HCT116 (cell line): ENCODE measurements at regions of chr10 and their contacts with region 1.

Region 1: DNA sequence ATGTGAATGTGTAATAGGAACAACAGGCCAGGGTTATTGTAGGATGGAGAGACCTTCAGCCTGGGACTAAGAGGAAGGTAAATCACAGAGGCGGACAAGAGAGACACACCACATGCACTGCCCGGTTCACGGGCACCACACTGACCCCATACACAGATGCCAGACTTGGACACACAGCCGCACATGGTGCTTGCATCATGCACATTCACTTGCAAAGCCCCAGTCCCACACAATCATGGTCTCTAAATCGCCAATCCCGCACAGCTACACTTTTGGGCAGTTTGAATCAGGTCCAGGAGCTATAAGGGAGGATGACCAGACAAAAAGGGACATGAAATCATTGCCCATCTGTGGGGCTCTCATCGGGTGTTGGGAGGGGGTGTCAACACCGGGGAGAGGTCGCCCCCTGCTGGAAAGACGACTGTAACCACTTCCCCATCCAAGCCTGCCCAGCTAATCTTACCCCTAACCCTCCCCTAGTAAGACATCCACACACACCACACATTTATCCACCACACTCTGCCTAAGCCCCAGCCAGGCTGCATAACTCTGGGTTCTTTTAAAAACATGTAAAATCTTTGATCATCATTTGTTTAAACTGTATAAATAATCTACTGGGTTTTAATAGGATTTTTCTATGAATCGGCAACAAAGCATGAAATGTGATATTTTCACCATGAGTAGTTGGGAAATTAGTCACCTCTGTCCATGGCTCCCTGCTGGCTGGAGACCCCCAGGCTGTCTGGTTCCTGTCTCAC is 40.5 kb upstream of the SLF2 start:
- DNase-seq: peak; percentile 51
- ATAC-seq: peak; percentile 96
- H3K4me3 ChIP-seq: no peak overlapping the region
- H3K27ac ChIP-seq: no peak overlapping the region
- H3K4me1 ChIP-seq: peaks cover 0 to 7% of the 10 kb centered on the region in 2 experiments; a peak in 1 of 4 replicates
- H3K27me3 ChIP-seq: no peaks in the 10 kb centered on the region
- CTCF ChIP-seq: peak; percentile 88 to 95 (median 94)
- POLR2A ChIP-seq: no peak
- RAD21 ChIP-seq: peak; percentile 94

Region 2: GRCh38 chr10:100562008-100562711 is 310.1 kb before region 1 on chr10:
- CTCF ChIA-PET with region 1: interaction called, 182 read pairs
- POLR2A ChIA-PET with region 1: no interaction called
- RAD21 ChIA-PET with region 1: interaction called, 4 to 5 read pairs
- intact Hi-C with region 1: loop called (anchors 1 kb)
- DNase-seq: peak; percentile 74
- ATAC-seq: peak; percentile 95
- H3K4me3 ChIP-seq: no peak overlapping the region
- H3K27ac ChIP-seq: no peak overlapping the region
- H3K4me1 ChIP-seq: peaks cover 0 to 10% of the 10 kb centered on the region in 2 experiments; a peak in 2 of 4 replicates
- H3K27me3 ChIP-seq: no peaks in the 10 kb centered on the region
- CTCF ChIP-seq: peak; percentile 99 to 100 (median 100)
- POLR2A ChIP-seq: no peak
- RAD21 ChIP-seq: peak; percentile 100

Region 3: GRCh38 chr10:100569618-100570473 is 302.4 kb before region 1 on chr10:
- CTCF ChIA-PET with region 1: interaction called, 182 read pairs
- POLR2A ChIA-PET with region 1: no interaction called
- RAD21 ChIA-PET with region 1: interaction called in 1 of 2 experiments, 3 read pairs
- intact Hi-C with region 1: no loop called
- DNase-seq: peak; percentile 37
- ATAC-seq: peak; percentile 87
- H3K4me3 ChIP-seq: peak overlapping the region; percentile 71 to 76
- H3K27ac ChIP-seq: peak overlapping the region; percentile 24; the same call in 1 of the 2 replicates
- H3K4me1 ChIP-seq: peaks cover 0 to 13% of the 10 kb centered on the region in 2 experiments; a peak in 2 of 4 replicates
- H3K27me3 ChIP-seq: no peaks in the 10 kb centered on the region
- CTCF ChIP-seq: peak; percentile 86 to 96 (median 95)
- POLR2A ChIP-seq: peak; percentile 55
- RAD21 ChIP-seq: peak; percentile 52

Region 4: DNA sequence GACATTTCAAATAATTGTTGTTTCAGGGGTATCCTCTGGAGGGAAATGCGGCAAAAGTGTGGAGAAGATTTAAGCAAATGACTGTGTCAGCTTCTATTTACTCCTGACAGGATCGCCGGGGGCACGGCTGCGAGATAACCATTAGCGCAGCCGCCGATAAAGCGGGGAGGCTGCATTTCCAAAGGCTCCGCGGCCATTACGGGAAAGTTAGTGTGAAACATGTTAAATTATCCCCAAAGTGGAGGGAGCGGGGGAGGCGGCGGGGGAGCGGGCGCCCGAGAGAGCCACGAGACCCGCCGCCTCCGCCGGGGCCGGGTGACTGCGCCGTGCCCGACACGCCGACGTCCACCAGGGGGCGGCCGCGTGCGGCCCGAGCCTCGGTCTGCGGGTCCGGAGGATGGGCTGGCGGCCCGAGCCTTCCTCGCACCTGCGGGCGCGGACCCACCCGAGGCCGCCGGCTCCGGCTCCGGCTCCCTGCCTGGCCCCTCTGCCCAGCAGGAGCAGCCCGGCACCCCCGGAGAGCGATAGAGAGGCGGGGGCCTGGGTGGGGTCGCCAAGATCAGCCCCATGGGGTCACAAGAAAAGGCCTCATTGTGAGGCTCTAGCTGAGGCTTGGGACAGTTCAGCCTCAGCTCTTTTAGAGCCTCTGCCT is 201.3 kb before region 1 on chr10:
- CTCF ChIA-PET with region 1: no interaction called
- POLR2A ChIA-PET with region 1: no interaction called
- RAD21 ChIA-PET with region 1: no interaction called
- intact Hi-C with region 1: loop called (anchors 1 kb)
- DNase-seq: no peak
- ATAC-seq: peak; percentile 95
- H3K4me3 ChIP-seq: peak overlapping the region; percentile 39 to 56
- H3K27ac ChIP-seq: no peak overlapping the region
- H3K4me1 ChIP-seq: peaks cover 6 to 10% of the 10 kb centered on the region in 2 experiments
- H3K27me3 ChIP-seq: peaks cover 22% of the 10 kb centered on the region
- CTCF ChIP-seq: peak; percentile 56 to 92 (median 83); a peak in 5 of 6 replicates
- POLR2A ChIP-seq: no peak
- RAD21 ChIP-seq: peak; percentile 58

Region 5: DNA sequence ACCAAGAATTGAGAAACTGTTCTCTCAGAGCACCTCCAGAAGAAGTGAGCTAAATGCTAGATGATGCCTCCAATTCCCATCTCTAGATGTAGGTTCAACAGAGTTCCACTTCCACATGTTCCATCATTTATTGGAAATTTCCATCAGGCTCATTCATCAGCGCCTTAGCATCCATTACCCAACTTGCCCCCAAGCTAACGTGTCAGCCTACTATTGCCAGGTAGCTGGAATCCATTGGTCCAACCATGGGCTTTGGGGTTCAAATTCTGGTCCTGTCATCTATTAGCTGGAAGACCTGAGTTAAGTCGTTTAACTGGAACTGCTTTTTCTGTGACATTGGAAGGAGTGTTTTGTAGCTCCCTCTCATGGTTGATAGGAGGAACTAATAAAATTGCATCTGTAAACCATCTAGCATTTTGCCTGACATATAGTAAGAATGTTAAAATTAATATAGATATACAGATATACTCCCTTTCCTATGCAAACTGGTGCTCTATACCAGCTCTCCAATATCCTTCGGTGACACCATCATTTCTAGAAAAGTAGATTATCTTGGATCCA is 16.7 kb after region 1 on chr10:
- CTCF ChIA-PET with region 1: interaction called, 10 read pairs
- POLR2A ChIA-PET with region 1: no interaction called
- RAD21 ChIA-PET with region 1: no interaction called
- intact Hi-C with region 1: no loop called
- DNase-seq: peak; percentile 34
- ATAC-seq: no peak; the same call in 1 of the 2 replicates
- H3K4me3 ChIP-seq: no peak overlapping the region
- H3K27ac ChIP-seq: no peak overlapping the region
- H3K4me1 ChIP-seq: peaks cover 24 to 43% of the 10 kb centered on the region in 2 experiments
- H3K27me3 ChIP-seq: no peaks in the 10 kb centered on the region
- CTCF ChIP-seq: peak; percentile 53 to 70 (median 64); a peak in 5 of 6 replicates
- POLR2A ChIP-seq: no peak
- RAD21 ChIP-seq: peak; percentile 60

Region 6: GRCh38 chr10:100901051-100901450 is 28.8 kb after region 1 on chr10:
- CTCF ChIA-PET with region 1: no interaction called
- POLR2A ChIA-PET with region 1: no interaction called
- RAD21 ChIA-PET with region 1: no interaction called
- intact Hi-C with region 1: no loop called
- DNase-seq: no peak
- ATAC-seq: no peak
- H3K4me3 ChIP-seq: no peak overlapping the region
- H3K27ac ChIP-seq: no peak overlapping the region
- H3K4me1 ChIP-seq: no peaks in the 10 kb centered on the region
- H3K27me3 ChIP-seq: no peaks in the 10 kb centered on the region
- CTCF ChIP-seq: no peak
- POLR2A ChIP-seq: no peak
- RAD21 ChIP-seq: no peak

Region 7: DNA sequence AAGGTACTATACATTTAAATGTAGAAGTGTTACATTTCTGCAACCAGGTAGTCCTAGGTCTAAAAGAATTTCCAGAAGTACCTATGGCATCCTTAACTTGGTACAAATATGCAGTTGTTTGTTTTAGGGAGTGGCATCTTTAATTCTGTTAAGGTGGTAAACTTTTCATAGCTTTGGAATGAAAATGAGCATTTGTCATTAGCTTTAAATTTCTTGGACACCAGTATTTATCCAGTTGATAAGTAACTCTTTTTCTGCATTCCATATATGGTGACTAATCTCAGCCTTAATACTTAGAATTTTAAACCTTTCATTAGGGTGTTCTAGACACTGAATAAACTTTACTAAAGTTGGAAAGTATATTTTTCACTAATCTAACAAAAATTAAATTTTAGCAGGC is 51.4 kb after region 1 on chr10:
- CTCF ChIA-PET with region 1: no interaction called
- POLR2A ChIA-PET with region 1: no interaction called
- RAD21 ChIA-PET with region 1: no interaction called
- intact Hi-C with region 1: no loop called
- DNase-seq: no peak
- ATAC-seq: no peak
- H3K4me3 ChIP-seq: no peak overlapping the region
- H3K27ac ChIP-seq: no peak overlapping the region
- H3K4me1 ChIP-seq: no peaks in the 10 kb centered on the region
- H3K27me3 ChIP-seq: no peaks in the 10 kb centered on the region
- CTCF ChIP-seq: no peak
- POLR2A ChIP-seq: no peak
- RAD21 ChIP-seq: no peak

Region 8: DNA sequence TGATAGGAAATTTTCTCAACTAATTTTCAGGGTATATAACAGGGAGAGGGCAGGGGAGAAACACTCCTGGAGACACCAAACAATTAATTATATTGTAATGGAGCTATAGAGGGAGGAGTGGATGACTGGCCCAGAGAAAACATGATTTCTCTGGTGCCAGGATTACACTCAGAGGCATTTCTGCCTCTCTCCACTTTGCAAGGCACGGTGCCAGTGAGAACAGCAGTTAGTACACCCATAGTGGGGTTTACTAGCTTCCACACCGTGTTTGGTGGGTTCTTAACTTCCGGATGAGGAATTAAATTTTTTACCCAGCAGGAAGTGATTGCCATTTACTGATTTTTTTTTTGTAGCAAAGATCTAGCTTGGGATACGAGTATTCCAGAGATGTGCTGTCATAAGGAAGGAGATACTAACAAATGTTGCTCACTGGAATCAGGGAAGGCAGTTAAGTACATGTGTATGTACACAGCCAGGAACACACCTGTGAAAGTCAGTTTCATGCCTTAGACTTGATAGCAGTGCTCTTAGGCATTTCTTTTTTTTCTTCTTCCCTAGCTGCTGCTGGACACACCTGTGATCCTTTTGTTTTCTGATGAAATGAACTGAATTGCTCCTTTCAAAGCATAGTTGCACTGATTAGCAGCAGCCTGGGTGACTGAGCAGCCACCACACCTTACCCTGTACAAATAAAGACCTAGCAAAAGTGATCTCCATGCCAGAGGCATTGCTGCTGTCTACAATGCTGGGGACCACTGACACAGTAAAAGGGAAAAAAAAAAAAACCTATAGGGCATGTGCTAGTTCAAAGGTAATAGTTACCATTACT is 657.7 kb after region 1 on chr10:
- CTCF ChIA-PET with region 1: no interaction called
- POLR2A ChIA-PET with region 1: no interaction called
- RAD21 ChIA-PET with region 1: no interaction called
- intact Hi-C with region 1: no loop called
- DNase-seq: no peak
- ATAC-seq: no peak
- H3K4me3 ChIP-seq: no peak overlapping the region
- H3K27ac ChIP-seq: no peak overlapping the region
- H3K4me1 ChIP-seq: no peaks in the 10 kb centered on the region
- H3K27me3 ChIP-seq: no peaks in the 10 kb centered on the region
- CTCF ChIP-seq: no peak
- POLR2A ChIP-seq: no peak
- RAD21 ChIP-seq: no peak